ENCODE measurements at regions of chr1 and their contacts with region 1.

Region 1: GRCh38 chr1:67586596-67586995 is 98.4 kb upstream of the GADD45A start:
- DNase-seq: no peak
- H3K4me3 ChIP-seq: no peak overlapping the region
- H3K27ac ChIP-seq: no peak overlapping the region
- H3K4me1 ChIP-seq: peaks cover 2 to 15% (median 10%) of the 10 kb centered on the region in 4 experiments
- H3K27me3 ChIP-seq: no peaks in the 10 kb centered on the region

Region 2: DNA sequence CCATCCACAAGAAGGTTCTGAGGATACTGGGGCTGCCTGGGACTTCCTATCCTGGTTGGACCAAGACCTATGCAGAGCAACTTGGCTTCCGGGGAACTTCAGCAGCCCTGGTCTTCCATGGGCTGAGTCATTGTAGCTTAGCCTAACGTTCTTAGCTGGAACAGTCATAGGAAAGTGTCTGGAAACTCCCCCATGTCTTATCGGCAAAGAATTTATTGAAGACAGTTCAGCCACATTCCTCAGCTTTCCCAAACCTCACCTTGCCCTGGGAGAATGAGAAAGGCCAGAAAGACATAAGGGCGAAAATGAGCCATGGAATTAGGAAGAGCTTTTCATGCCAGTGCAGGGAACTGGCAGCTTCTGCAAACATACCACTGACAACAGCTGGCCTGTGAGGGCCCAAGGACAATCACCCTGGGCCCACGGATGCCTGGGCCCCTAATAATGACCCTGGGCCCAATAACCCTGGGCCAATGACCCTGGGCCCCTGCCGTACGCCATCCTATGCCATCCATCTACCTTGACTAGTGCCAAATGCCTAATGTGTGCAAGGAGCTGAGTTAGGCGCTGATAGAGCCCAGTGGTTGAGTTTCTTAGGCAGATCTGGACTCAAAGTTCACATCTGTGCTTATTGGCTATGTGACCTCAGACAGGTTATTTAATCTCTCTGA is 16.0 kb before region 1 on chr1:
- CTCF ChIA-PET with region 1: interaction called, 43 read pairs
- POLR2A ChIA-PET with region 1: interaction called, 4 read pairs
- DNase-seq: no peak
- H3K4me3 ChIP-seq: no peak overlapping the region
- H3K27ac ChIP-seq: no peak overlapping the region
- H3K4me1 ChIP-seq: no peaks in the 10 kb centered on the region
- H3K27me3 ChIP-seq: no peaks in the 10 kb centered on the region

Region 3: DNA sequence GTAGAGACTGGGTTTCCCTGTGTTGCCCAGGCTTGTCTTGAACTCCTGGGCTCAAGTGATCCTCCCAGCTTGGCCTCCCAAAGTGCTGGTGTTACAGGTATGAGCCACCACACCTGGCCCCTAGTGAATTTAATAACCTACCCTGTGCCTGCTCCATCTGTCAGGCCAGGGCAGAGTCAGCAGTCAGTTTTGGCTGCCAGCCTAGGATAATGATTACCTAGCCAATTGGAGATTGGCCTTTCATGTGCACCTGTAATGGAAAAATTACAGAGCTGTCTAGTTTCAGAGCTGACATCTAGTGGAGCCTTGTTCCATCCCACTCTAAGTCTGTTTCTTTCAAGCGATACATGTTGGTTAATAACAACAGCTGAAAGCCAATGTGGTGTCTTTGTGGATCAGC is 371.9 kb after region 1 on chr1:
- CTCF ChIA-PET with region 1: no interaction called
- POLR2A ChIA-PET with region 1: no interaction called
- DNase-seq: no peak
- H3K4me3 ChIP-seq: no peak overlapping the region
- H3K27ac ChIP-seq: no peak overlapping the region
- H3K4me1 ChIP-seq: no peaks in the 10 kb centered on the region
- H3K27me3 ChIP-seq: no peaks in the 10 kb centered on the region

Measured in common myeloid progenitor, CD34-positive (primary cell).